ENCODE measurements at regions of chr19 and their contacts with region 1.

Region 1: DNA sequence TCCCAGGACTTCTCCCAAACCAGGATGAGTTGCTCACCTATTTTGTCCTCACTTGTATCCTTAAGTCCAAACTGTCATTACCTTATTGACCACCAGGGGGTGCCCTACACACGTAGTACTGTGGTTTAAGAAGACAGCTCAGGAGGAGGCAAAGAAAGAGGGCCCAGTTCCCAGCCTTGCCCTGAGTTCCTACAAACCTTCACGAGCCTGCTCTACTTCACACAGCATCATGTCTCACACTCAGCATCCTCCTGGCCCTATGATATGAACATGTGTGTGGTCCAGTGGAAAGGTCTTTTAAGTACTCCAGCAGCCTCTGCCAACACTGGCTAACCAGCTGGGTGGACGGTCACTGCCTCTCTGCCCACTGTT is 8.1 kb upstream of the ZNF784 start:
- DNase-seq: peak; percentile 80 to 99
- ATAC-seq: peak; percentile 70 to 81
- H3K4me3 ChIP-seq: no peak overlapping the region
- H3K27ac ChIP-seq: no peak overlapping the region
- H3K4me1 ChIP-seq: peaks cover 17% of the 10 kb centered on the region
- CTCF ChIP-seq: peak; percentile 91
- EP300 ChIP-seq: no peak
- POLR2A ChIP-seq: no peak
- RAD21 ChIP-seq: peak; percentile 62 to 82

Region 2: DNA sequence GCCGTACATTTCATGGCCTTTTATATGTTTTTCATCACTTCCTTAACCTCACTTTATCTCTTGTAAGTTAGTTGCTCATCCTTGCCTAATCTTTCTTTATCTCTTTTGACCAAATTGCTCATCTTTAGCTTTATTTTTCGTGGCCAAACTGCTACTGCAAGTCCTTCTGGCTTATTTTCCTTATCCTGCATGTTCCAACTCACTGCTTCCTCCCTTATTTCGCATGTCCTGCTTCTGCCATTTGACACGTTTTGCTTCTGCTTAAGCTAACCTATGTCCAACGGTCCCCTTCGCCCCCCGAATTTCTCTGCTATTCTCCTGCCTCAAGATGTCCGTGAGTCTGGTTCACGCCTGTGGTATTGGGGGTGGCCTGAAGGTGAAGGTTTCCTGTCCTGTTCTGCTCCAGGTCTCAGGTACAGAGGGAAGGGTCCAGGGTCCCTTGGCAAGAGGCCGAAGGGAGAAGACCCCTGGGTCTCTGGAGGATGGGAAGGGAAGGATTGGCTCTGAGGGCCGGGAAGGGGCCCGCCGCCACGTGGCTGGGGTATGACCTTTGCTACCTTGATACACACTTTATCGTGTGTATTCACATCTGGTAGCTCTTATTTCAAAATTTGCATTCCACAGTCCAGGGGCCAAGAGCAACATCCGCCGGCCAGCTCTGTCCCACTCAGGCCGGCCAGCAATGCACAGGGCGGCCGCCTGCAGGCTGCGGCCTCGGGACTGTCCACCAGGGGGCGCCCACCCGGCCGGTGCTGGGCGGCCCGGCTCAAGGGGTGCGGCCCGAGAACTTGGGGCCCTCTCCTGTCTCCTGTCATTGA is 165.0 kb before region 1 on chr19:
- CTCF ChIA-PET with region 1: interaction called, 115 read pairs
- POLR2A ChIA-PET with region 1: no interaction called
- DNase-seq: peak; percentile 48 to 73
- ATAC-seq: peak; percentile 75 to 93
- H3K4me3 ChIP-seq: no peak overlapping the region
- H3K27ac ChIP-seq: peak overlapping the region; percentile 6 to 35; a peak in 3 of 6 replicates
- H3K4me1 ChIP-seq: peaks cover 6% of the 10 kb centered on the region; the same call in 2 of the 3 replicates
- CTCF ChIP-seq: peak; percentile 99
- EP300 ChIP-seq: no peak
- POLR2A ChIP-seq: no peak
- RAD21 ChIP-seq: peak; percentile 57 to 73

Region 3: GRCh38 chr19:55494172-55494761 is 138.2 kb before region 1 on chr19:
- CTCF ChIA-PET with region 1: interaction called, 43 read pairs
- POLR2A ChIA-PET with region 1: no interaction called
- DNase-seq: no peak
- ATAC-seq: no peak
- H3K4me3 ChIP-seq: no peak overlapping the region
- H3K27ac ChIP-seq: no peak overlapping the region
- H3K4me1 ChIP-seq: peaks cover 26% of the 10 kb centered on the region; the same call in 2 of the 3 replicates
- CTCF ChIP-seq: no peak
- EP300 ChIP-seq: no peak
- POLR2A ChIP-seq: no peak
- RAD21 ChIP-seq: no peak

Region 4: GRCh38 chr19:55599468-55600279 is 32.8 kb before region 1 on chr19 and contains the start of gene FIZ1:
- CTCF ChIA-PET with region 1: interaction called, 57 read pairs
- POLR2A ChIA-PET with region 1: interaction called, 8 read pairs
- DNase-seq: peak; percentile 90 to 99
- ATAC-seq: peak; percentile 78 to 91
- H3K4me3 ChIP-seq: peak within 1 kb of the TSS; percentile 69
- H3K27ac ChIP-seq: peak within 1 kb of the TSS; percentile 95 to 96
- H3K4me1 ChIP-seq: peaks cover 20% of the 10 kb centered on the region
- CTCF ChIP-seq: no peak
- EP300 ChIP-seq: no peak
- POLR2A ChIP-seq: peak; percentile 33
- RAD21 ChIP-seq: no peak; a peak in 1 of 5 replicates
- polyA plus RNA-seq, gene FIZ1: 10.3 and 10.4 TPM in 2 replicates

Region 5: DNA sequence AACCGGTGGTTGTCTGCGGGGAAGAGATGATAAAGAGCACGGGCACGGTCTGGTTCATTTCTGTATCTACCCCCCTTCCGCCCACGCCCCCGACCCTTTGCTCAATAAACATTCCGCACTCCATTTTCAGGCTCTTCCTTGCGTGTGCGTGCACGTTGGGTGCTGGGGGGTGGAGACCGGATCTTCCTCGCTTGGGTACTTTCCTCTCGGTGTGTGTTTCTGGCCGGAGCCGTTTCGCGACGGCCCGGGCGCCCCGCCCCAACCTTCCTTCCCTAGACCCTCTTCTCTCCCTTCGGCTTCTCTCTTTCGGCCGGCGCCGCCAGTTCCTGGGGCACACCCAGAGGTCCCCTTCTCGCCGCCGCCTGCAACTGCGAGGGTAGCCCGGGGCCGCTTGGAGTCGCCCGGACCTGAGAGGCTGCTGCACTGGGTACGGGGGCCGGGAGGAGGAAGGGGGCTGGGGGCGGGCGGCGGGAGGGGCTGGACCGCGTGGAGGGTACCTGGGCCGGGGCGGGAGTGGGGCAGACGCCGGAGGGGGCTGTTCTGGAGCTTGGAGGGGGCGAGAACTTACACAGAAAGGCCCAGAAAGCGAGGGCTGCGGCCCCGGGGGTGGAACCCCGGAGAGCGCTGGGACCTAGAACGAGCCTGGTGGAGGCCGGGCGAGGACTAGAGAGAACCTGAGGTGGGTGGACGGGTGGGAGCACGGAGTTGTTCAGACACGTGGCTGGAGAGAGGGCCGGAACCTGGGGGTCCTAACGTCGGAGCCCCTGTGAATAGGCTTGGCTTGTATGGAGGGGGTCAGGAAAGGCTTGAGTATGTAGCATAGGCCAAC is 11.1 kb after region 1 on chr19 and contains the start of gene ZNF581:
- CTCF ChIA-PET with region 1: interaction called, 70 read pairs
- POLR2A ChIA-PET with region 1: interaction called, 5 read pairs
- DNase-seq: peak; percentile 86 to 97
- ATAC-seq: peak; percentile 45 to 65
- H3K4me3 ChIP-seq: peak within 1 kb of the TSS; percentile 63
- H3K27ac ChIP-seq: peak within 1 kb of the TSS; percentile 92 to 97
- H3K4me1 ChIP-seq: peaks cover 38% of the 10 kb centered on the region
- CTCF ChIP-seq: no peak
- EP300 ChIP-seq: no peak
- POLR2A ChIP-seq: peak; percentile 45
- RAD21 ChIP-seq: no peak
- polyA plus RNA-seq, gene ZNF581: 13.9 and 17.1 TPM in 2 replicates

Region 6: GRCh38 chr19:55766466-55766865 is 134.0 kb after region 1 on chr19:
- CTCF ChIA-PET with region 1: no interaction called
- POLR2A ChIA-PET with region 1: no interaction called
- DNase-seq: no peak
- ATAC-seq: no peak
- H3K4me3 ChIP-seq: no peak overlapping the region
- H3K27ac ChIP-seq: no peak overlapping the region
- H3K4me1 ChIP-seq: no peaks in the 10 kb centered on the region
- CTCF ChIP-seq: no peak
- EP300 ChIP-seq: no peak
- POLR2A ChIP-seq: no peak
- RAD21 ChIP-seq: no peak

Region 7: GRCh38 chr19:56080669-56081401 is 448.4 kb after region 1 on chr19:
- CTCF ChIA-PET with region 1: no interaction called
- POLR2A ChIA-PET with region 1: no interaction called
- DNase-seq: peak; percentile 48 to 65
- ATAC-seq: peak; percentile 10 to 64; a peak in 4 of 6 replicates
- H3K4me3 ChIP-seq: no peak overlapping the region
- H3K27ac ChIP-seq: no peak overlapping the region
- H3K4me1 ChIP-seq: no peaks in the 10 kb centered on the region
- CTCF ChIP-seq: peak; percentile 17; the same call in 2 of the 3 replicates
- EP300 ChIP-seq: no peak
- POLR2A ChIP-seq: no peak
- RAD21 ChIP-seq: peak in 1 of 2 experiments; percentile 46; a peak in 2 of 5 replicates

Measured in A549 (cell line).